ENCODE measurements at regions of chr19 and their contacts with region 1.

Region 1: DNA sequence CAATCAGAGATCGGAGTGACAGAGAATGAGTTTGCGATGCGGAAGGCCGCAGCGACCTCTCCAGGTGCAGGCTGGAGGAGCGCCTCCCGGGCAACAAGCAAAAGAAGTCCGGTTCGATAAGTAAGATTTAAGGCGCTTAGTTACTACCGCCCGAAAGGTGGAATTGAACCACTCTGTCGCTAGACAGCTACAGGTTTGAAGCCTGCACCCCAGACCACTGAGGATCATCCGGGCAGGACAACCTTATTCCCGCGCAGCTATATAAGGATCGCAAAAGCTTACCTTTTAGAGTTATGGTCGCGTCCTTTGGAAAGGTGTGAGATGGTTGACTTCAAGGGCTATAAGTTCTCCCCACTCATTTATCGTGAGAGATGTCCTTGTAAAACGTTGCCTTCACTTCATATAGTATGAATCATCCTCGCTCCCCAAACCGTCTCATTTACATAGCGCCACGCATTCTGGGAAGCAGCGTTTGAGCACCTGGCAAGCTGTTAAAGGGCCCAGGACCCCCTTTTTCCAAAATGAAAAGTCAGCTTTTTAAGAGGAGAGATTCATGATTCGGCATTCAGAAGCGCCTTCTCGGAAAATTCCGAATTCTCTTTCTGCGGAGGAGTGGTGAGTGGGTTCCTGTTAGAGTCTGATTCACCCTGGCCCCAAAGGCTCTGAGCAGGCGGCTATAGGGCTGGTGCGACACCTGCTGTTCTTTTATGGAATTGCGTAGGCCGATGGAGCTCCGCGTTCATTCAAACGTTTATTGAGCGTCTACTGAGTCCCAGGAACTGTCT is 10.8 kb downstream of the FOSB start:
- DNase-seq: peak; percentile 90 to 94
- H3K4me3 ChIP-seq: peak overlapping the region; percentile 42
- H3K4me1 ChIP-seq: peaks cover 5% of the 10 kb centered on the region
- H3K27me3 ChIP-seq: no peaks in the 10 kb centered on the region

Region 2: GRCh38 chr19:45439569-45440254 is 38.9 kb before region 1 on chr19:
- in situ Hi-C with region 1: loop called (anchors 5 kb)
- DNase-seq: peak; percentile 65 to 85
- H3K4me3 ChIP-seq: peak overlapping the region; percentile 47
- H3K4me1 ChIP-seq: peaks cover 15% of the 10 kb centered on the region
- H3K27me3 ChIP-seq: no peaks in the 10 kb centered on the region

Region 3: GRCh38 chr19:45711851-45712698 is 233.4 kb after region 1 on chr19:
- in situ Hi-C with region 1: no loop called
- DNase-seq: no peak
- H3K4me3 ChIP-seq: no peak overlapping the region
- H3K4me1 ChIP-seq: peaks cover 3% of the 10 kb centered on the region
- H3K27me3 ChIP-seq: no peaks in the 10 kb centered on the region